Activated T-helper 2 cell treated with anti-CD3 and anti-CD28 coated beads, Interferon-gamma antibody, Interleukin-2, Interleukin-4, amounts not matched to agents 10 μg/mL and 5 μg/mL and 100 μg/mL, durations not matched to agents 14 hours and 24 hours and 36 hours (primary cell): ENCODE measurements at regions of chr17 and their contacts with region 1.

Region 1: DNA sequence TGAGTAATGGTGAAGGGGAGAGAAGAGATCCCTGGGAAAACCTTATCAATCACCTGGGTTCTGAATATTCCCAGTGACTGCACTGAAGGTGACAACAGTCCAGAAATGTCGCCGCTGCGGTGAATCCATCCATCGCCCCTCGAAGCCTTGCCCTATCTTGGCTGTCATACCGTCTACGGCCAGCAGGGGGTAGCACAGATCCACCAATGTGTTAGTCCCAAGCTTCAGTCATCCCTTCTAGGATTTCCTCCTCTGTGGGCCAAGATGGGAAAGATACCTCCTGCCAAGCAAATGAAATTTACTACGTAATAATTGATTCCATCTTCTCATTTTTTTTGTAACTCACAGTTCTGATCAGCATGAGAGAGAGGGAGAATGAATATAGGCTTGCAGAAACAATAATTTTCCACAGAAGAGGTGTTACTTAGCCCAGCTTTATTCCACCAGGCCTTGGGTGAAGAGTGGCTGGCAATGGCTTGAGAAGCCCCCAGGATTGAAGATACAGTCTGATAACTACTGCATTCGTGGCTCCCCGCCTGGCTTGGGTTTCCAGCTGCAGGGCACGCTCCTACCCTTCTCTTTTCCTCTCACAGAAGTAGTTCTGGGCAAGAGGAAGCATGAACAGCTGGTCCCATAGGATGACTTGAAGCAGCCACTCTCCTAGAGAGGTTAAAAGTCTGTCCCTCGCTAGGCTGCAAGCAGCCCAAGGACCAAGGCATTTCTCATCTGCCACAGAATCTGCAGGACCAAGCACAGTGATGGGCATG is 2.6 kb upstream of the FMNL1 start:
- DNase-seq: peak; percentile 73
- H3K4me3 Mint-ChIP-seq: peak overlapping the region; percentile 85
- H3K27ac Mint-ChIP-seq: peak overlapping the region; percentile 64
- H3K4me1 Mint-ChIP-seq: peaks cover 28% of the 10 kb centered on the region
- H3K27me3 Mint-ChIP-seq: no peaks in the 10 kb centered on the region

Region 2: GRCh38 chr17:45161019-45161825 is 57.9 kb before region 1 on chr17:
- intact Hi-C with region 1: loop called (anchors 2 kb)
- DNase-seq: peak; percentile 99
- H3K4me3 Mint-ChIP-seq: peak overlapping the region; percentile 98
- H3K27ac Mint-ChIP-seq: peak overlapping the region; percentile 98
- H3K4me1 Mint-ChIP-seq: peaks cover 29% of the 10 kb centered on the region
- H3K27me3 Mint-ChIP-seq: no peaks in the 10 kb centered on the region

Region 3: DNA sequence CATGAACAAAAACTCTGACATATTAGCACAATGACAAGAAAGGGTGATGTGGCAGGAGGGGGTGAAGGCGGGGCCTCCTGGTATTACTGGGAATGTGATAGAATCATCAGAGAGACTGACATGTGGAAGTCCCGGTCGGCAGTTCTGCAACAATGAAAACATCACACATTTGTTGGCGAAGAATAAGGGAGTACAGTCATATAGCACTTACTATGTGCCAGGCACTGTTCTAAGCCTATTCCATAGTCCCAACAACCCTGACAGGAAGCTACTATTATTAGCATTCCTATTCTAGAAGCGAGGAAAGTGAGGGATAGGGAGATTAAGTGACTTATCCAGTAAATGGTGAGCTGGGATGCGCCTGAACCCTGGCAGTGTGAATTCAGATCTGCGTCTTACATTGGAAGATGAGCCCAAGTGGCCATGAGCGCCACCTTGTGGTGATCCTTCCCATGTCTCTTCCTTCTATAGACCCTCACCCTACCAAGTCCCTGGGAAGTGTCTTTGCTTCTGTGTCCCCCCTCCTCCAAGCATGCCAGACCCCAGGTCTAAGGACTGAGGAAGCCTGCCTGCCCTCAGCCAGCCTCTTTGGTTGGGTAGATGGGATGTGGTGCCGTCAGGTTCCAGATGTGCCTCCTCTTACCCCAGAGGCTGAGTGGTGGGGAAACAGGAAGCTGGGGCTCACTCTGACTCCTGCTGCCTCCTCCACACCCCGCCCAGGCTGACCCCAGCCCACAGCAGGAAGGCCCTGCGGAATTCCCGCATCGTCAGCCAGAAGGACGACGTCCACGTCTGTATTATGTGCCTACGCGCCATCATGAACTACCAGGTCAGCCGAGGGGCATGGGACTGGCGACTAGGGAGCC is 16.6 kb after region 1 on chr17:
- intact Hi-C with region 1: loop called (anchors 1 kb)
- DNase-seq: peak; percentile 61
- H3K4me3 Mint-ChIP-seq: no peak overlapping the region
- H3K27ac Mint-ChIP-seq: peak overlapping the region; percentile 97
- H3K4me1 Mint-ChIP-seq: peaks cover 53% of the 10 kb centered on the region
- H3K27me3 Mint-ChIP-seq: no peaks in the 10 kb centered on the region

Region 4: GRCh38 chr17:45247429-45248131 is 28.5 kb after region 1 on chr17:
- intact Hi-C with region 1: loop called (anchors 1 kb)
- DNase-seq: peak; percentile 95
- H3K4me3 Mint-ChIP-seq: peak overlapping the region; percentile 91
- H3K27ac Mint-ChIP-seq: peak overlapping the region; percentile 91
- H3K4me1 Mint-ChIP-seq: peaks cover 53% of the 10 kb centered on the region
- H3K27me3 Mint-ChIP-seq: no peaks in the 10 kb centered on the region

Region 5: GRCh38 chr17:45270828-45271418 is 51.8 kb after region 1 on chr17:
- intact Hi-C with region 1: loop called (anchors 2 kb)
- DNase-seq: peak; percentile 33
- H3K4me3 Mint-ChIP-seq: no peak overlapping the region
- H3K27ac Mint-ChIP-seq: peak overlapping the region; percentile 70
- H3K4me1 Mint-ChIP-seq: peaks cover 14% of the 10 kb centered on the region
- H3K27me3 Mint-ChIP-seq: no peaks in the 10 kb centered on the region

Region 6: GRCh38 chr17:45311760-45312476 is 92.8 kb after region 1 on chr17:
- intact Hi-C with region 1: loop called (anchors 1 kb)
- DNase-seq: peak; percentile 80
- H3K4me3 Mint-ChIP-seq: peak overlapping the region; percentile 99
- H3K27ac Mint-ChIP-seq: peak overlapping the region; percentile 99
- H3K4me1 Mint-ChIP-seq: peaks cover 68% of the 10 kb centered on the region
- H3K27me3 Mint-ChIP-seq: no peaks in the 10 kb centered on the region

Region 7: GRCh38 chr17:45385331-45385997 is 166.4 kb after region 1 on chr17:
- intact Hi-C with region 1: loop called (anchors 1 kb)
- DNase-seq: peak; percentile 79
- H3K4me3 Mint-ChIP-seq: no peak overlapping the region
- H3K27ac Mint-ChIP-seq: peak overlapping the region; percentile 69
- H3K4me1 Mint-ChIP-seq: peaks cover 22% of the 10 kb centered on the region
- H3K27me3 Mint-ChIP-seq: peaks cover 2% of the 10 kb centered on the region